Activated T-helper 2 cell treated with anti-CD3 and anti-CD28 coated beads, Interferon-gamma antibody, Interleukin-2, Interleukin-4, amounts not matched to agents 10 μg/mL and 5 μg/mL and 100 μg/mL, durations not matched to agents 14 hours and 24 hours and 36 hours (primary cell): ENCODE measurements at regions of chr21 and their contacts with region 1.

Region 1: DNA sequence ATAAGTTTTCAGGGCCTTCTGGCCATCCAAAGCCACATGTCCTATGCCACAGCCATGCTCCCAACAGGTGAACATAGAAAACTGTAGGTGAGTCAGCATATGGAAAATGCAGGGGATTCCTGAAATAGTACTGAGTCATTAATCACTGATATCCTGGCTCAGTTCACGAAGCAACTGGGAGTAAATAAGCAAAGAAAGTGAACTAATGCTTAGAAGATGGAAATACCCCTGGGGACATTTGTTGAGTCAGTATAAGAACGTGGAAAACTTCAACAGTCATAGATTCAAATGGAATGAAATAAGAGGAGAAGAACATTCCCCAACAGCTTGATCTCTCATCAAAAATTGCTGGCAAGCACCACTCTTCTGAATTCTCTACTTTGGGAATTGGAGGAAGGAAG is 148.9 kb upstream of the RUNX1 start:
- DNase-seq: no peak
- H3K4me3 Mint-ChIP-seq: no peak overlapping the region
- H3K27ac Mint-ChIP-seq: peak overlapping the region; percentile 64
- H3K4me1 Mint-ChIP-seq: peaks cover 38% of the 10 kb centered on the region
- H3K27me3 Mint-ChIP-seq: no peaks in the 10 kb centered on the region

Region 2: GRCh38 chr21:35179990-35180540 is 18.0 kb before region 1 on chr21:
- intact Hi-C with region 1: loop called (anchors 1 kb)
- DNase-seq: no peak
- H3K4me3 Mint-ChIP-seq: no peak overlapping the region
- H3K27ac Mint-ChIP-seq: no peak overlapping the region
- H3K4me1 Mint-ChIP-seq: peaks cover 16% of the 10 kb centered on the region
- H3K27me3 Mint-ChIP-seq: no peaks in the 10 kb centered on the region